B cell (primary cell): ENCODE measurements at regions of chr5 and their contacts with region 1.

Region 1: DNA sequence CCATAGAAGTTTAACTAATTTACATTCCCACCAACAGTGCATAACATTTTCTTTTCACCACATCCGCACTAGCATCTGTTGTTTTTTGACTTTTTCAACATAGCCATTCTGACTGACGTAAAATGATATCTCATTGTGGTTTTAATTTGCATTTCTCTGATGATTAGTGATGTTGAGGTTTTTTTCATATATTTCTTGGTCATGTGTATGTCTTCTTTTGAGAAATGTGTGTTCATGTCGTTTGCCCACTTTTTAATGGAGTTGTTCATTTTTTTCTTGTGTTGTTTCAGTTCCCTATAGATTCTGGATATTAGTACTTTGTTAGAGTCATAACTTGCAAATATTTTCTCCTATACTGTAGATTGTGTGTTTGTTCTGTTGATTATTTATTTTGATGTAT is 163.4 kb downstream of the FER start:
- DNase-seq: peak; percentile 26
- ATAC-seq: peak; percentile 69
- H3K4me3 ChIP-seq: no peak overlapping the region
- H3K4me3 Mint-ChIP-seq: peak overlapping the region; percentile 12
- H3K27ac ChIP-seq: no peak overlapping the region
- H3K27ac Mint-ChIP-seq: peak overlapping the region; percentile 62
- H3K4me1 ChIP-seq: no peaks in the 10 kb centered on the region
- H3K4me1 Mint-ChIP-seq: peaks cover 14% of the 10 kb centered on the region
- H3K27me3 ChIP-seq: no peaks in the 10 kb centered on the region
- H3K27me3 Mint-ChIP-seq: no peaks in the 10 kb centered on the region
- CTCF ChIP-seq: no peak

Region 2: GRCh38 chr5:108748401-108749127 is 162.5 kb before region 1 on chr5:
- CTCF ChIA-PET with region 1: no interaction called
- POLR2A ChIA-PET with region 1: no interaction called
- intact Hi-C with region 1: loop called (anchors 2 kb)
- DNase-seq: peak; percentile 98
- ATAC-seq: peak; percentile 91
- H3K4me3 ChIP-seq: peak overlapping the region; percentile 74 to 90 (median 83)
- H3K4me3 Mint-ChIP-seq: peak overlapping the region; percentile 92
- H3K27ac ChIP-seq: peak overlapping the region; percentile 91 to 94
- H3K27ac Mint-ChIP-seq: peak overlapping the region; percentile 86
- H3K4me1 ChIP-seq: peaks cover 14 to 17% of the 10 kb centered on the region in 2 donors
- H3K4me1 Mint-ChIP-seq: peaks cover 10% of the 10 kb centered on the region
- H3K27me3 ChIP-seq: no peaks in the 10 kb centered on the region
- H3K27me3 Mint-ChIP-seq: no peaks in the 10 kb centered on the region
- CTCF ChIP-seq: no peak

Region 3: GRCh38 chr5:108858959-108859358 is 52.1 kb before region 1 on chr5:
- CTCF ChIA-PET with region 1: no interaction called
- POLR2A ChIA-PET with region 1: no interaction called
- intact Hi-C with region 1: loop called (anchors 2 kb)
- DNase-seq: peak; percentile 48
- ATAC-seq: peak; percentile 74
- H3K4me3 ChIP-seq: peak overlapping the region in 1 of 5 experiments; percentile 16
- H3K4me3 Mint-ChIP-seq: peak overlapping the region; percentile 9
- H3K27ac ChIP-seq: no peak overlapping the region
- H3K27ac Mint-ChIP-seq: peak overlapping the region; percentile 48
- H3K4me1 ChIP-seq: peaks cover 4 to 6% of the 10 kb centered on the region in 2 donors
- H3K4me1 Mint-ChIP-seq: peaks cover 12% of the 10 kb centered on the region
- H3K27me3 ChIP-seq: no peaks in the 10 kb centered on the region
- H3K27me3 Mint-ChIP-seq: no peaks in the 10 kb centered on the region
- CTCF ChIP-seq: no peak

Region 4: DNA sequence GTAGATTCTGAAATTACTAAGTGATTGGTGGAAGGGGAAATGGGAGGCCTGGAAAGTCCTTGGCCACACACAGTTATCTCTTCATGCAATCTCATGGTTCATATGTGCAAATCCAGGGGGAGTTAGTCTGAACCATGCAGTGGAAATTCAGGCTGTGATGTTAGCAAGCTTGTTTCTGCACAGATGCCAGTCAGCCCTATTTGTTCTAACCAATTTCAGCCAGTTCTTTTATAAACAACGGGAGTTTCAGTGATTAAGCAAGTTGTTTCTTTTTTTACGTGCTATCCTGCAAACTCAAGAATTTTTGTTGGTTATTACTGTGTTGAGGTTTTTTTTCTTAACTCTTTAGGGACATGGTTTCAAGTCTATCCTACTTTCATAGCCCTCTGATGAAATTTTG is 134.7 kb after region 1 on chr5:
- CTCF ChIA-PET with region 1: no interaction called
- POLR2A ChIA-PET with region 1: no interaction called
- intact Hi-C with region 1: no loop called
- DNase-seq: no peak
- ATAC-seq: no peak
- H3K4me3 ChIP-seq: no peak overlapping the region
- H3K4me3 Mint-ChIP-seq: no peak overlapping the region
- H3K27ac ChIP-seq: no peak overlapping the region
- H3K27ac Mint-ChIP-seq: no peak overlapping the region
- H3K4me1 ChIP-seq: peaks cover 0 to 6% of the 10 kb centered on the region in 2 donors
- H3K4me1 Mint-ChIP-seq: no peaks in the 10 kb centered on the region
- H3K27me3 ChIP-seq: no peaks in the 10 kb centered on the region
- H3K27me3 Mint-ChIP-seq: no peaks in the 10 kb centered on the region
- CTCF ChIP-seq: no peak